ENCODE measurements at regions of chr14 and their contacts with region 1.

Region 1: DNA sequence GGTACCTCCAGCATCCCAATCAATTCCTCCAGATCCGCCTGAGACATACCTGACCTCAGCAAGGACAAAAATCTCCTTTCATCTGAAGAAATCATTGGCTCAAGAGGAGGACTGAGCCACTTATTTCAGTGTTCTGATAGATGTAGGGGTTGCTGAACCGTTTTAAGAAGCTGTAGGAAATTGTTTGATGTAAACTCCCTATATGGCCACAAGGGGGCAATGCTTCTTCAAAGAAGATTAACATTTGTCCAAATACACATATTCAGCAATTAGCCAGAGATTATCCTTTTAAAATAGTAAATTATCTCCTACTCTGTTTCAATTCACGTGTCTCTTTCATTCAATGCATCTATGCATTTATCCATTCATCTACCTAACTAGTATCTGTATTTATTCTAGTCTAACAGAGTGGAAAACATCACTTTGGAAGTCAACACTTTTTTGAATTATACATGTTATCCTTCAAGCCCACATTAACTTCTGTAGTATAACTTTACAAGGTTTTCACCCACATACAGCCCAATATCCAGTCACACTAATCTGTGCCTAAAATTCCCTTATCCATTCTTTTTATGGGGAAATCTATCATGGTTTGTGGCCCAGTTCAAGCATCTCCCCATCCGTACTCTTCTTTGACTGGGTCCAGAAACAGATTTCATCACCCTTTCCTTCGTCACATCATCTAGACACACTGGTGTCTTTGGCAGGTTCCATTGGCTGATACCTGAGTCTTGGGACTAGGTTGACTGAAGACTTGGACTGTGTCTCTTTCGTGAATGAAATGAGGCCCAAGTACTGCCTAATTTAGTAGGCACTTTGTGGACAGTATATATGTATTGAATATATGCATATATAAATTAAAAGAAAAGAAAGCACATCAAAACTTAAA is 411.0 kb upstream of the OR4E1 start:
- DNase-seq: peak; percentile 20
- H3K4me3 Mint-ChIP-seq: no peak overlapping the region
- H3K27ac Mint-ChIP-seq: no peak overlapping the region
- H3K4me1 Mint-ChIP-seq: peaks cover 7% of the 10 kb centered on the region
- H3K27me3 Mint-ChIP-seq: peaks cover 14% of the 10 kb centered on the region
- CTCF ChIP-seq: peak; percentile 28

Region 2: GRCh38 chr14:22039938-22040775 is 44.5 kb before region 1 on chr14:
- CTCF ChIA-PET with region 1: no interaction called
- intact Hi-C with region 1: loop called (anchors 1 kb)
- DNase-seq: peak; percentile 24
- H3K4me3 Mint-ChIP-seq: no peak overlapping the region
- H3K27ac Mint-ChIP-seq: no peak overlapping the region
- H3K4me1 Mint-ChIP-seq: no peaks in the 10 kb centered on the region
- H3K27me3 Mint-ChIP-seq: peaks cover 38% of the 10 kb centered on the region
- CTCF ChIP-seq: no peak

Region 3: DNA sequence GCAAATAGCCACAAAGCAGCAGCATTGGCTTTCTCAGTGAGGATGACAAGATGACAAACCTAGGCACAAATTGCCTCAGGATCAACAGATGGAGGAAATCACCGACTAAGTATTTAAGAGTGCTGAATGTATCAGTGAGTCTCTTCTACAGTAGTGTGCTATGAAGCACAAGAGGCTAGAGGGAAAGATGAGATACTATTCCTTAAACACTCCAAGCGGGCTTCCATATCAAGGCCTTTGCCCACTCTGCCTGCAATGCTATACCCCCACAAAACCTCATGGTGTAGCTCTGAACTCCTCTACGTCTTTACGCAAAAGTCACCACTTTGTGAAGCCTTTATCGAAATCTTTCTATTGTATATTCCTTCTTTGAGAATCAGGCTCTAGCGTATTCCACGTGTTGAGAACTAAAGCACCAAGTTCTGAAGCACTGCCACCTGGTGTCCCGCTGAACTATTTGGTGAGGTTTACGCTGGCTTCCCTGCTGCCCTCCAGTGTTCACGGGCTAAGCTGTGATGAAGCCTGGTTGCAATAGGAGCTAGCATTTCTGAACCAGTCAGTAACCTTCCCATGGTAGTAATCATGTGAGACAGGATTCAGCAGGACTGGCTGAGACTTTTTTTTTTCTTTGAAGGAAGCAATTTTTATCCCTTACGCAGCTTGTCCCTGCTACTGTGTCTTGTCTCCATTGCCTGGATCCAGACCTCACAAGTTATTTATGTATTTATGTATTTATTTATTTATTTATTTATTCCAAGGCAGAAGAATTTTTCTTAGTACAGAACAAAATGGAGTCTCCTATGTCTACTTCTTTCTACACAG is 15.5 kb after region 1 on chr14:
- CTCF ChIA-PET with region 1: interaction called, 33 read pairs
- intact Hi-C with region 1: loop called (anchors 1 kb)
- DNase-seq: peak; percentile 75
- H3K4me3 Mint-ChIP-seq: no peak overlapping the region
- H3K27ac Mint-ChIP-seq: no peak overlapping the region
- H3K4me1 Mint-ChIP-seq: peaks cover 9% of the 10 kb centered on the region
- H3K27me3 Mint-ChIP-seq: peaks cover 6% of the 10 kb centered on the region
- CTCF ChIP-seq: peak; percentile 55